ENCODE measurements at regions of chr7 and their contacts with region 1.

Region 1: GRCh38 chr7:26376175-26376917 is 84.7 kb downstream of the SNX10 start:
- DNase-seq: peak; percentile 73
- ATAC-seq: peak; percentile 69
- H3K4me3 ChIP-seq: peak overlapping the region; percentile 51
- H3K27ac ChIP-seq: peak overlapping the region; percentile 80
- H3K4me1 ChIP-seq: peaks cover 6% of the 10 kb centered on the region
- H3K27me3 ChIP-seq: peaks cover 41% of the 10 kb centered on the region
- CTCF ChIP-seq: no peak

Region 2: GRCh38 chr7:25720427-25720826 is 655.9 kb before region 1 on chr7:
- intact Hi-C with region 1: no loop called
- DNase-seq: no peak
- ATAC-seq: no peak
- H3K4me3 ChIP-seq: no peak overlapping the region
- H3K27ac ChIP-seq: no peak overlapping the region
- H3K4me1 ChIP-seq: no peaks in the 10 kb centered on the region
- H3K27me3 ChIP-seq: no peaks in the 10 kb centered on the region
- CTCF ChIP-seq: peak; percentile 31

Region 3: GRCh38 chr7:26245150-26245549 is 131.2 kb before region 1 on chr7:
- intact Hi-C with region 1: no loop called
- DNase-seq: no peak
- ATAC-seq: no peak
- H3K4me3 ChIP-seq: no peak overlapping the region
- H3K27ac ChIP-seq: no peak overlapping the region
- H3K4me1 ChIP-seq: no peaks in the 10 kb centered on the region
- H3K27me3 ChIP-seq: no peaks in the 10 kb centered on the region
- CTCF ChIP-seq: no peak

Region 4: GRCh38 chr7:26667500-26668133 is 291.3 kb after region 1 on chr7:
- intact Hi-C with region 1: loop called (anchors 5 kb)
- DNase-seq: no peak
- ATAC-seq: peak; percentile 95
- H3K4me3 ChIP-seq: no peak overlapping the region
- H3K27ac ChIP-seq: no peak overlapping the region
- H3K4me1 ChIP-seq: no peaks in the 10 kb centered on the region
- H3K27me3 ChIP-seq: no peaks in the 10 kb centered on the region
- CTCF ChIP-seq: peak; percentile 76